Heart right ventricle (tissue), 16 donors: ENCODE measurements at regions of chr1 and their contacts with region 1.

Region 1: DNA sequence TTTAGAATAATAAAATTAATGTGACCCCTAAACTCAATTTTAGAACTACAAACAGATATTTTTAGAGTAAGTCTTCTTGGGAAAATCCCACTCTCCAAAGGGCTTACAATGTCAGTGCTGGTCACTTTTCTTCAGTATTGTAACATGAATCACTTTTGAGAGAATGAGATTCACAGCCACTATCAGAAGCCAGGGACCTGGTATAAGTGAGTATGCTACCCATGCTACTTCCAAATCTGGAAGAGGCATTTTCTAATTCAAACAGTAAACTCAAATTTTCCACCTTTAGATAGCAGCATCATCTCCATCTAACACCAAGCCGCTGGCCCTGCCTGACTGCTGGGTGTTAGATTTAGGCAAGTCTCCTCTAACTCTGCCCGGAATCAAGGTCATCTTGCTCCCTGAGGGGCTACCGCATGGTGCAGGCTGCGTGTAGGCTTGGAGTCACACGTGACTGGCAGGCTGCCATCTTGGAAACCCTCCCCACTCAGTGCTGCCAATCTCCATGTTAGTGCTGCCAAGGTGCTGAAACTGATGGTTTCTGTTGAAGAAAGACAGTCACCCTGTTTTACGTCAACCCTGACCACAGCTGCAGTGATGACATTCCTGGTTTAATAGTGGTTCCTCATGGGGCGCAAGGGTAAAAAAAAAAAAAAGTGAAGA is 882.9 kb upstream of the B3GALT2 start:
- DNase-seq: peak; percentile 78 to 85
- ATAC-seq: peak; percentile 81 to 99 (median 95)
- H3K4me3 ChIP-seq: no peak overlapping the region
- H3K27ac ChIP-seq: peak overlapping the region; percentile 68 to 86 (median 79)
- H3K4me1 ChIP-seq: peaks cover 0 to 27% (median 11%) of the 10 kb centered on the region in 9 donors
- H3K27me3 ChIP-seq: no peaks in the 10 kb centered on the region
- CTCF ChIP-seq: no peak

Region 2: DNA sequence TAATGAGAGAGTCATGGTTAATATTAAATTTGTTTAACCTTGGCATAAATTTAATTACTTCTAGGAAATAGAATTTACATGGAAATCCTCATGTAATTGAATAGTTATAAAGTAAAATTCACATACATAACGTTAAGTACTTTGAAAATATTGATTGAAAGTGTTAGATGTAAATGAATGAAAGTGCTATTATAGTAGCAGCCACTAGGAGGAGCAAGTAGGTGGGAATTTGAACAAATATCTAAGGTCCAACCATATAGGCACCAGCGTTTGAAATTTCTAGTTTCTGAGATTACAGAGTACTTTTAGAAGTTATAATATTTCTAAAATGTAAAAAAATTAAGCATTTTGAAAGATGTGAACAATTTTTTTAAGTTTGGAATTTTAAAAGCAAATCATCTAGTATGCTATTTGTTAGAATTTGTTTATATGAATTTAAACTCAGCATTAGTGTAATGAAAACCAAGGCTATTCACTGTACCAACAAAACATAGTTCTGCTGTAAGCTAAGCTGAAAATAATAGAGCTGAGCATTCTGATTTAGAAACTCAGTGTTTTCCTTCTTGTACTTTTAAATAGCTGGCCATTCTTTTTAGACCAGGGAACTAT is 886.2 kb before region 1 on chr1:
- intact Hi-C with region 1: loop called in 4 of 10 experiments (anchors 5 to 10 kb)
- DNase-seq: peak in 1 of 2 donors; percentile 17
- ATAC-seq: peak in 4 of 8 donors; percentile 55 to 63 (median 56)
- H3K4me3 ChIP-seq: peak overlapping the region in 9 of 10 donors; percentile 30 to 55 (median 49)
- H3K27ac ChIP-seq: peak overlapping the region in 6 of 10 donors; percentile 1 to 81 (median 42)
- H3K4me1 ChIP-seq: peaks cover 0 to 78% (median 31%) of the 10 kb centered on the region in 9 donors
- H3K27me3 ChIP-seq: no peaks in the 10 kb centered on the region
- CTCF ChIP-seq: peak; percentile 73 to 92 (median 83)

Region 3: GRCh38 chr1:193589597-193590040 is 479.7 kb before region 1 on chr1:
- intact Hi-C with region 1: loop called in 1 of 10 experiments (anchors 10 kb)
- DNase-seq: peak; percentile 11 to 16
- ATAC-seq: peak; percentile 52 to 86 (median 78)
- H3K4me3 ChIP-seq: peak overlapping the region in 1 of 10 donors; percentile 10
- H3K27ac ChIP-seq: peak overlapping the region in 9 of 10 donors; percentile 8 to 74 (median 62)
- H3K4me1 ChIP-seq: peaks cover 0 to 48% (median 11%) of the 10 kb centered on the region in 9 donors
- H3K27me3 ChIP-seq: no peaks in the 10 kb centered on the region
- CTCF ChIP-seq: no peak

Region 4: DNA sequence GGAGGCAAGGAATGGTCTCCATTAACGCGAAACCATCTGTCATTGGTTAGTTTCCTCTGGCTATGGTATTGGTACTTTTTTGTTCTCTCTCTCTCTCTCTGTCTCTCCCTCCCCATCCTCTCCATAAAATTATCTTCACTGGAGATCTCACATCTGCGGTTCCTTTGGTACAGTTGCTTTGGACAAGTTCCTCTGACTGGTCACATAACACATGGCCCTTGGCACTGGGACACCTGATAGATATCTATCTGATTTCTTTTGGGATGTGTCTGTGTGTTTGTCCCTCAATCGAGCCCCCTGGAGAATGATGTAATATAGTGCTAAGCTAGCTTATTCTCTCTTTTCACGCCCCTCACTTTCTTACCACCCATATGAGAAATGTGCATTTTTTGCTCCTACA is 200.9 kb before region 1 on chr1:
- intact Hi-C with region 1: no loop called
- DNase-seq: no peak
- ATAC-seq: no peak
- H3K4me3 ChIP-seq: no peak overlapping the region
- H3K27ac ChIP-seq: no peak overlapping the region
- H3K4me1 ChIP-seq: no peaks in the 10 kb centered on the region
- H3K27me3 ChIP-seq: no peaks in the 10 kb centered on the region
- CTCF ChIP-seq: no peak

Region 5: DNA sequence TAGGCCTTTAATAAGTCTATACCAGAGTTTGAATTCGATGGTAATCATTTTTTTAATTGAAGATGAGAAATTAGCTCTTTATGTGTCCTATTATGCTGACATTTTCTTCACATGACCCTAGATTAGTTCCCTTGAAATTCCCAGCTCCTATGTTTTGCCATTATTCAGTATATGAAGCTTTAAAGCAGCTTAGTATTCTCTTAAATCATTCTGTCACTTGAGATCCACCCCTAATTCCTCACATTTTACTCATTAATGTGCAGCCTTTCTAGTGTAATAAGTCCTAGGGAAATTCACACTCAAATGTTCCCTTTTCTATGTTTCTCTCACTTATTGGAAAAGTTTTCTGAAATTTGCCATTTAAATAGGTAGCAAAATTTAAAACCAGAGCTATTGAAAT is 178.4 kb before region 1 on chr1:
- intact Hi-C with region 1: loop called in 1 of 10 experiments (anchors 10 kb)
- DNase-seq: no peak
- ATAC-seq: no peak
- H3K4me3 ChIP-seq: no peak overlapping the region
- H3K27ac ChIP-seq: no peak overlapping the region
- H3K4me1 ChIP-seq: no peaks in the 10 kb centered on the region
- H3K27me3 ChIP-seq: no peaks in the 10 kb centered on the region
- CTCF ChIP-seq: no peak

Region 6: GRCh38 chr1:193960499-193960898 is 108.8 kb before region 1 on chr1:
- intact Hi-C with region 1: loop called in 1 of 10 experiments (anchors 10 kb)
- DNase-seq: no peak
- ATAC-seq: peak in 5 of 8 donors; percentile 59 to 85 (median 70)
- H3K4me3 ChIP-seq: no peak overlapping the region
- H3K27ac ChIP-seq: peak overlapping the region in 8 of 10 donors; percentile 35 to 74 (median 62)
- H3K4me1 ChIP-seq: peaks cover 0 to 11% (median 0%) of the 10 kb centered on the region in 9 donors
- H3K27me3 ChIP-seq: no peaks in the 10 kb centered on the region
- CTCF ChIP-seq: no peak

Region 7: DNA sequence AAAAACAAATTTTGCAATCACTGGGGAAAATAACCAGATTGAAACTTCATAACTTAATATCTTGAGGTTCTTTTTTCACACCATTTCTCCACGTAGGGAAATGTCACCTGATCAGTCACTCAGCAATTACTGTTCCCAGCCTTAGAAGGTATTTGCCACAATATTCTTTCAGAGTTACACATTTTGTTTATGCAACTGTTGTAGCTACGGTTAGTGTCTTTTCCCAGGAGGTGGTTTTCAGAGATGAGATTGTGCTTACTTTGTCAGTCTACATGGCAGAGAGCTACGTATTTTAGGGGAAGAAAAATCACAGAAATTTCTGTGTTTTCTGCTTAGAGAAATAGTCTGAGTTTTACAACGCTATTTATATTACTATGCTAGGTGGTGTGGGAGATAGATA is 90.1 kb before region 1 on chr1:
- intact Hi-C with region 1: loop called in 2 of 10 experiments (anchors 5 kb)
- DNase-seq: no peak
- ATAC-seq: no peak
- H3K4me3 ChIP-seq: no peak overlapping the region
- H3K27ac ChIP-seq: no peak overlapping the region
- H3K4me1 ChIP-seq: peaks cover 0 to 4% (median 0%) of the 10 kb centered on the region in 9 donors
- H3K27me3 ChIP-seq: no peaks in the 10 kb centered on the region
- CTCF ChIP-seq: no peak

Region 8: DNA sequence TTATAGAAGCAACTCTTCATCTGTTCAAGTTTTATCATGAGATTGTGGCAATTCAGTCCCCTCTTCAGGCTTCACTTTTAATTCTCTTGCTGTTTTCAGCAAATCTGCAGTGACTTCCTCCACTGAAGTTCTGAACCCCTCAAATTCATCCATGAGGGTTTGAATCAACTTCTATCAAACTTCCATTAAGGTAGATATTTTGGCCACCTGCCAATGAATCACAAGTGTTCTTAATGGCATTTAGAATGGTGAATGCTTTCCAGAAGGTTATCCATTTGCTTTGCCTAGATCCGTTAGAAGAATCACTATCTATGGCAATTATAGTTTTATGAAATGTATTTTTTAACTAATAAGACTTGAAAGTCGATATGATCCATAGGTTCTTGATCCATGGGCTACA is 63.9 kb after region 1 on chr1:
- intact Hi-C with region 1: no loop called
- DNase-seq: no peak
- ATAC-seq: no peak
- H3K4me3 ChIP-seq: no peak overlapping the region
- H3K27ac ChIP-seq: no peak overlapping the region
- H3K4me1 ChIP-seq: no peaks in the 10 kb centered on the region
- H3K27me3 ChIP-seq: no peaks in the 10 kb centered on the region
- CTCF ChIP-seq: no peak